ENCODE measurements at regions of chr19 and their contacts with region 1.

Region 1: DNA sequence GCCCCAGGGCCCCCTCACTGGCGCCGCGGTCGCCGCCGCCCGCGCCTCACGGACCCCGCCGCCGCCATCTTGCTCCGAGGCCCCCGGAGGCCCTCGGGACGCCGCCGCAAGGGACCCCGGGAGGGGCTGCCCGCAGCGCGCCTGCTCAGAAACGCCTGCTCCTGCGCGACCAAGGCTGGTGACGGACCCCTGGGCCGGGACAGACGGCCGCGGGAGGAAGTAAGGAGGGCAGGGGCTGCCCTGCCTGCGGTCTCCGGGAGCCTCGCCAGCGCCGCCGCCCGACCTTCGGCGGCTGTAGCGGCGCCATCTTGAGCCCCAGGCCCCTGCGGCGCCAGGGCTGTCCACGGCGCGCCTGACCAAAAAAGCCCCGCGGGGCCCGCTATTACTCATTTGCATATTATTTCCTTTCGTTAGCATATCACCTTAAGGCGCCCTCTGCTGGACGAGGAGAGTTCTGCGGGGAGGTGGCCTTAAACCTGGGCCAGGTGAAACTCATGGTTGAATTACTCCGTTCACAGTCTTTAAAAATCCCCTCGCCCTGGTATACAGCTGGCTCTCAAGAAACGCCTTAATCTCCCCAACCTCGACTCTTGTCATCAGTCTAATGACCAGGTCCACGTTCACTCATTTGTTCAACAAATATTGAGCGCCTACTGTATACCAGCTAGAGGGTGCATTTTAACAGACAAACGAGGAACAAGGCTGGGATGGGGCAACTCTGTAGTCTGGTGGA is at the start of gene REXO1:
- DNase-seq: no peak
- H3K4me3 ChIP-seq: peak within 1 kb of the TSS; percentile 96
- CTCF ChIP-seq: peak; percentile 78

Region 2: GRCh38 chr19:1837625-1838105 is 10.9 kb before region 1 on chr19:
- CTCF ChIA-PET with region 1: interaction called, 57 read pairs
- POLR2A ChIA-PET with region 1: no interaction called
- DNase-seq: no peak
- H3K4me3 ChIP-seq: no peak overlapping the region
- CTCF ChIP-seq: peak; percentile 95